Left cardiac atrium (tissue), 4 donors: ENCODE measurements at regions of chr11 and their contacts with region 1.

Region 1: DNA sequence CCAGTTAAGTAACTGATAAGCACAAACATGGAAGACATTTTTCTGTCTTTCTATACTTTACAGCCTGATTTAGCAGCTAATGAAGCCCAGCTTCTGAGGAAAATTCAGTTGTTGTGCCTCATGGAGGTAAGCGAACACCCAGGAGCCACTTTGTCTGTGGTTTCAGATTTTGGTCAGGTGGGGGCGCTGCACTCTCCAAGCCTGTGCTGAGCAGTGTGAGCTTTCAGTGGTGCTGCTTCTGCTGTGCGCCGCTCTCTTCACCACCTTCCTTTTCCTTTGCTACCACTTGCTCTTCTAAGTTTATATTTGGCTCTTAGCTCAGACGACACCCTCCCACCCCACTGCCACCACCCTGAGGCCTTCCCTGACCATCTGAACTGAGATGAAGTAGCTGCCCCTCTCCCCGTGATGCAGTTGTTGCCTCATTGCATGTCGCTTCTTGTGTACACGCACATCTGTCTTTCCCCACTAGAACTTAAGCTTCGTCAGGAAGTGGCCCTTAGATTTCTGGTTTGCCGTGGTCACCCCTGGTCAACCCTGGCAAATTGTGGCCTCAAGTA is 14.0 kb downstream of the PSMD13 start:
- DNase-seq: peak; percentile 54
- ATAC-seq: peak; percentile 67 to 68

Region 2: GRCh38 chr11:355581-356458 is 105.0 kb after region 1 on chr11:
- intact Hi-C with region 1: loop called in 1 of 2 experiments (anchors 5 kb)
- DNase-seq: peak; percentile 98
- ATAC-seq: peak; percentile 86 to 91

Region 3: DNA sequence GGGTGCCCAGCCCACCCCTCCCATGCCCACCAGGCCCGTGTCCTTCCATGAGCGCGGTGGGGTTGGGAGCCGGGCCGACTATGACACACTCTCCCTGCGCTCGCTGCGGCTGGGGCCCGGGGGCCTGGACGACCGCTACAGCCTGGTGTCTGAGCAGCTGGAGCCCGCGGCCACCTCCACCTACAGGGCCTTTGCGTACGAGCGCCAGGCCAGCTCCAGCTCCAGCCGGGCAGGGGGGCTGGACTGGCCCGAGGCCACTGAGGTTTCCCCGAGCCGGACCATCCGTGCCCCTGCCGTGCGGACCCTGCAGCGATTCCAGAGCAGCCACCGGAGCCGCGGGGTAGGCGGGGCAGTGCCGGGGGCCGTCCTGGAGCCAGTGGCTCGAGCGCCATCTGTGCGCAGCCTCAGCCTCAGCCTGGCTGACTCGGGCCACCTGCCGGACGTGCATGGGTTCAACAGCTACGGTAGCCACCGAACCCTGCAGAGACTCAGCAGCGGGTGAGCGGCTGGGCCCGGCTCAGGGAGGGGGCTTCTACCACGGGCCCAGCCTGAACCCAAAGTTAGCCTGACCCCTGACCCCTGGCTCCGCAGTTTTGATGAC is 146.2 kb after region 1 on chr11:
- intact Hi-C with region 1: loop called in 1 of 2 experiments (anchors 10 kb)
- DNase-seq: peak; percentile 74
- ATAC-seq: peak; percentile 68 to 92

Region 4: GRCh38 chr11:447923-448731 is 197.3 kb after region 1 on chr11:
- intact Hi-C with region 1: no loop called
- DNase-seq: peak; percentile 97
- ATAC-seq: peak; percentile 85 to 89

Region 5: GRCh38 chr11:629237-629583 is 378.4 kb after region 1 on chr11:
- intact Hi-C with region 1: no loop called
- DNase-seq: no peak
- ATAC-seq: no peak